ENCODE measurements at regions of chr11 and their contacts with region 1.

Region 1: GRCh38 chr11:128506999-128507611 is 80.3 kb downstream of the ETS1 start:
- DNase-seq: peak in 7 of 14 experiments; percentile 38 to 62 (median 53)
- ATAC-seq: peak; percentile 28
- H3K4me3 ChIP-seq: peak overlapping the region; percentile 89
- H3K4me3 Mint-ChIP-seq: peak overlapping the region; percentile 93
- H3K27ac ChIP-seq: peak overlapping the region; percentile 68 to 93
- H3K27ac Mint-ChIP-seq: peak overlapping the region; percentile 99
- H3K4me1 ChIP-seq: peaks cover 86% of the 10 kb centered on the region
- H3K4me1 Mint-ChIP-seq: peaks cover 100% of the 10 kb centered on the region
- H3K27me3 ChIP-seq: no peaks in the 10 kb centered on the region
- H3K27me3 Mint-ChIP-seq: no peaks in the 10 kb centered on the region
- CTCF ChIP-seq: no peak

Region 2: DNA sequence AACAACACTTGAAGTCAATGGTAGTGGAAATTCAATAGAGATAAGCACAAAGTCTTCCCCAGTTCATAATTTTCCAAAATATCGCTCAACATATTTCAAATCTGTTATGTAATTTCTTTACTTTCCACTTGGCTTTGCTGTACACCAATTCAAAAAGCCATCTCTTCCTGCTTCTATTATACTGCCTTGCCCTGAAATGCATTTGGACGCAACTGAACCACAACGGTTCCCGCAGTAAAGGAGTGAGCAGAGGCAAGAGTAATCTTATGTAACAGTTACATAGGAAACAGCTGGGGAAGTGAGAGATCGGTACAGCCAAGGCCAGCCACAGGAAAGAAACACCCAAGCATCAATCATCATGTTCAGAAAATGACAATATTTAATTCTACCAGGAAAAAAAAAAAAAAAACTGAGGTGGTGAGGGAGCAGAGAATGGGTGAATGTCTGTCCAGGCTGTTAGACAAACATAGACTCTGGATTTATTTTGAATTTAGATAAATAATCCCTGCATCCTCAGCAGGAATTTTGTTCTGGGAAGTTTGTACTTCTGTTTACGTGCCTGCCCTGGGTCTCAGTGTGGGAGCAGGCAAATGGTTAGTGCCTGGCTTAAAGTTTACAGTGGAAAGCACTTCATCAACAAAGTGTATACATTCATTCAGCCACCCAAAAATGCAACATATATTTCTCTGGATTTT is 311.9 kb before region 1 on chr11:
- CTCF ChIA-PET with region 1: no interaction called
- POLR2A ChIA-PET with region 1: no interaction called
- intact Hi-C with region 1: loop called in 1 of 2 experiments (anchors 1 kb)
- DNase-seq: peak in 13 of 14 experiments; percentile 9 to 86 (median 39)
- ATAC-seq: peak; percentile 98
- H3K4me3 ChIP-seq: no peak overlapping the region
- H3K4me3 Mint-ChIP-seq: peak overlapping the region; percentile 47
- H3K27ac ChIP-seq: peak overlapping the region in 1 of 2 donors; percentile 33
- H3K27ac Mint-ChIP-seq: peak overlapping the region; percentile 60
- H3K4me1 ChIP-seq: peaks cover 9% of the 10 kb centered on the region
- H3K4me1 Mint-ChIP-seq: peaks cover 35% of the 10 kb centered on the region
- H3K27me3 ChIP-seq: no peaks in the 10 kb centered on the region
- H3K27me3 Mint-ChIP-seq: no peaks in the 10 kb centered on the region
- CTCF ChIP-seq: peak; percentile 58

Region 3: DNA sequence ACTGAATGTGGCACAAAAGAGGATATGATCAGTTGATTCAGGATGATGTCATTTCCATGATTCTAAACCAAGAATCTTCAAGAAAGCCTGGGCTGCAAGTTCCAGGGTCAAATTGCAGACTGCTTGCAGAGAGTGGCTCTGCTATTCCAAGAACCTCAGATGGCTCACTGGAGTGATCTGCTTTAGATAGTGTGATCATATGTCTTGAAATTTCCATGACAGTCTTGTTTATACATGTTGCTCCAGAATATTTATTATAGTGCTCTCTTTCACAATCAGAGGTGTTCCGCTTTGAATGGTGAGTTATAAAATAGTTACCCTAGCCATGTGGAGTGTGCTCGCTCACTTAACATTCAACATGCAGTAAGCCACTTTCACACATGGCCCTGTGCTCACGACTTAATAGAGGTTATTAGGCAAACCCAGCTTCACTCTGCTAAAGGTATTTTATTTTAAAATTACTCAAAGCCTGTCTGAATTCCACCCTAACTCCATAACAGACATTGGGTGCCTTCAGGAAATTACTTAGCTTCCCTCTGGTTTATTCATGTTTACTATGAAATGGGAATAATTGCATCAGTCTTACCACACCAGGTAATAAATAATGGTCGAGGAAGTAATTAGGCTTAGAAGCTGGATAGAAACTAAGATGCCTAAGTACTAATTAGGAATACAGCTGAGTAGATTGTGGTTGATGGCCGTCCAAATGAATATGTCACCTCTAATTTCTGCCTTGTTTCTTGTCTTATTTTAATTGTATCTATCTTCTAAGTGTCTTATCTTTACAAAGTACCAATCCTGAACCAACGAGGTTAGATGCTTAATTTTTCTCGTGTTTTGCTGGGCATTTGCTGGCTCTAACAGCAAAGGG is 107.6 kb before region 1 on chr11:
- CTCF ChIA-PET with region 1: no interaction called
- POLR2A ChIA-PET with region 1: no interaction called
- intact Hi-C with region 1: no loop called
- DNase-seq: peak in 1 of 14 experiments; percentile 18
- ATAC-seq: no peak
- H3K4me3 ChIP-seq: no peak overlapping the region
- H3K4me3 Mint-ChIP-seq: no peak overlapping the region
- H3K27ac ChIP-seq: no peak overlapping the region
- H3K27ac Mint-ChIP-seq: peak overlapping the region; percentile 21
- H3K4me1 ChIP-seq: peaks cover 4% of the 10 kb centered on the region
- H3K4me1 Mint-ChIP-seq: peaks cover 25% of the 10 kb centered on the region
- H3K27me3 ChIP-seq: no peaks in the 10 kb centered on the region
- H3K27me3 Mint-ChIP-seq: no peaks in the 10 kb centered on the region
- CTCF ChIP-seq: no peak

Region 4: DNA sequence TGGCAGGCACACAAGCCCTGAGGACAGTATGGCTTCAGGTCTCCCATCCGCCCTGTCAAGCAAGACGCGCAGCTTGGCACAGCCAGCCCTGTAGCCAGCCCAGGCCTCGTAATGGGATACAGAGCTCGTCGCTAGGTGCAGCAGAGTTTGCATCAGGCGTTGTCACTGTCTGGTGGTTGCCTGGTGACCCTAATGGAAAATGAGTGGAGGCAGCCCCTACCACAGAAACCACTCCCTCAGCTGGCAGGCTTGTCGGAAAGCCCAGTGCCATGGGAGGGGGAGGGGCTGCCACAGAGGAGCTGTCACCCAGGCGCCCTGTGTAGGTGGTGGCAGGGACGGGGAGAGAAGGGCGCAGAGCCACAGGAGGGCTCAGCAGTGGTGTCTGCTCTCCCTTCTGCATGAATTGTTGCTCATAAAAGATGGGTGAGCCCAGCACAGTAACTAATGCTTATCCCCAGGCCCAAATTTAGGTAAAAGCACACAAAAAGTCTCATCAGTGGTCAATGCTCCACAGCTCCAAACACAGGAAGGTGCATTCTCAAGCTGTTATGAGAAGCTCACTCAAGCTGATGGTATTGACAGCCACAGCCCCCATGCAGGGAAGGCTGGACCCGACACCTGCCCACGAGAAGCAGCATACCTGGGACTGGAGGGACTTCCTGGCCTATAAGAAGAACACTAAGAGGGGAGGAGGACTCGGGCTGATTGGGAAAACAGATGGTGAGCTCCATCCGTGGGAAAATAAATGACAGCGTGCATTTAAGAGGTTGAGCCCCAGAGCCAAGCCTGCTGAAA is 84.3 kb before region 1 on chr11:
- CTCF ChIA-PET with region 1: interaction called, 3 read pairs
- POLR2A ChIA-PET with region 1: interaction called, 4 read pairs
- intact Hi-C with region 1: loop called in 1 of 2 experiments (anchors 5 kb)
- DNase-seq: peak; percentile 64 to 96 (median 82)
- ATAC-seq: peak; percentile 92
- H3K4me3 ChIP-seq: peak overlapping the region; percentile 13
- H3K4me3 Mint-ChIP-seq: peak overlapping the region; percentile 74
- H3K27ac ChIP-seq: peak overlapping the region in 1 of 2 donors; percentile 24
- H3K27ac Mint-ChIP-seq: peak overlapping the region; percentile 96
- H3K4me1 ChIP-seq: peaks cover 37% of the 10 kb centered on the region
- H3K4me1 Mint-ChIP-seq: peaks cover 75% of the 10 kb centered on the region
- H3K27me3 ChIP-seq: no peaks in the 10 kb centered on the region
- H3K27me3 Mint-ChIP-seq: no peaks in the 10 kb centered on the region
- CTCF ChIP-seq: no peak

Region 5: GRCh38 chr11:128482512-128483191 is 24.5 kb before region 1 on chr11:
- CTCF ChIA-PET with region 1: interaction called, 13 read pairs
- POLR2A ChIA-PET with region 1: interaction called, 611 read pairs
- intact Hi-C with region 1: loop called in 1 of 2 experiments (anchors 2 kb)
- DNase-seq: peak in 6 of 14 experiments; percentile 51 to 87 (median 70)
- ATAC-seq: peak; percentile 58
- H3K4me3 ChIP-seq: peak overlapping the region; percentile 46
- H3K4me3 Mint-ChIP-seq: peak overlapping the region; percentile 76
- H3K27ac ChIP-seq: peak overlapping the region; percentile 92 to 94
- H3K27ac Mint-ChIP-seq: peak overlapping the region; percentile 99
- H3K4me1 ChIP-seq: peaks cover 95% of the 10 kb centered on the region
- H3K4me1 Mint-ChIP-seq: peaks cover 99% of the 10 kb centered on the region
- H3K27me3 ChIP-seq: no peaks in the 10 kb centered on the region
- H3K27me3 Mint-ChIP-seq: no peaks in the 10 kb centered on the region
- CTCF ChIP-seq: no peak

Region 6: GRCh38 chr11:128630367-128631230 is 123.5 kb after region 1 on chr11:
- CTCF ChIA-PET with region 1: interaction called, 22 read pairs
- POLR2A ChIA-PET with region 1: interaction called, 53 read pairs
- intact Hi-C with region 1: loop called in 1 of 2 experiments (anchors 5 kb)
- DNase-seq: peak; percentile 85 to 98 (median 92)
- ATAC-seq: peak; percentile 79
- H3K4me3 ChIP-seq: no peak overlapping the region
- H3K4me3 Mint-ChIP-seq: peak overlapping the region; percentile 62
- H3K27ac ChIP-seq: peak overlapping the region; percentile 56 to 70
- H3K27ac Mint-ChIP-seq: peak overlapping the region; percentile 97
- H3K4me1 ChIP-seq: peaks cover 65% of the 10 kb centered on the region
- H3K4me1 Mint-ChIP-seq: peaks cover 69% of the 10 kb centered on the region
- H3K27me3 ChIP-seq: no peaks in the 10 kb centered on the region
- H3K27me3 Mint-ChIP-seq: no peaks in the 10 kb centered on the region
- CTCF ChIP-seq: peak; percentile 89